Common myeloid progenitor, CD34-positive (primary cell): ENCODE measurements at regions of chr7 and their contacts with region 1.

Region 1: GRCh38 chr7:116211006-116211912 is 920 bp downstream of the TES start:
- DNase-seq: peak; percentile 82 to 91 (median 87)
- H3K4me3 ChIP-seq: peak overlapping the region; percentile 57 to 99 (median 88)
- H3K27ac ChIP-seq: peak overlapping the region; percentile 80 to 91
- H3K4me1 ChIP-seq: peaks cover 38 to 63% (median 49%) of the 10 kb centered on the region in 4 experiments
- H3K27me3 ChIP-seq: no peaks in the 10 kb centered on the region

Region 2: DNA sequence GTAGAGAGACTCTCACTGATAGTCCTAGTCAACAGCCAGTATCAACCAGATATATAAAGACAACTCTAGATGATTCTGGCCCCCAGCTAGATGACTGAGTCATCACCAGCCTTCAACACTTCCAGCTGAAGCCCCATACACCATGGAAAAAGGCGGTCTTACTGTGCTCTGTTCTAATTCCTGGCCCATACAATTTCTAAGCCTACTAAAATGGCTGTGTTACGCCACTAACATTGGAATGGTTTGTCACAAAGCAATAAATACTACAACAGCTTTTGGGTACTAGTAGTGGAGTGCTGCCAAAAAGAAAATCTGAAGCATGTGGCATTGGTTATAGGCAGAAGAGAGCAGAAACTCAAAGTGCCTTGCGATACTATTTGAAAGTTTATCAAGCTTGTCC is 13.9 kb before region 1 on chr7:
- CTCF ChIA-PET with region 1: interaction called, 26 read pairs
- POLR2A ChIA-PET with region 1: interaction called, 5 read pairs
- DNase-seq: no peak
- H3K4me3 ChIP-seq: no peak overlapping the region
- H3K27ac ChIP-seq: no peak overlapping the region
- H3K4me1 ChIP-seq: no peaks in the 10 kb centered on the region
- H3K27me3 ChIP-seq: no peaks in the 10 kb centered on the region

Region 3: DNA sequence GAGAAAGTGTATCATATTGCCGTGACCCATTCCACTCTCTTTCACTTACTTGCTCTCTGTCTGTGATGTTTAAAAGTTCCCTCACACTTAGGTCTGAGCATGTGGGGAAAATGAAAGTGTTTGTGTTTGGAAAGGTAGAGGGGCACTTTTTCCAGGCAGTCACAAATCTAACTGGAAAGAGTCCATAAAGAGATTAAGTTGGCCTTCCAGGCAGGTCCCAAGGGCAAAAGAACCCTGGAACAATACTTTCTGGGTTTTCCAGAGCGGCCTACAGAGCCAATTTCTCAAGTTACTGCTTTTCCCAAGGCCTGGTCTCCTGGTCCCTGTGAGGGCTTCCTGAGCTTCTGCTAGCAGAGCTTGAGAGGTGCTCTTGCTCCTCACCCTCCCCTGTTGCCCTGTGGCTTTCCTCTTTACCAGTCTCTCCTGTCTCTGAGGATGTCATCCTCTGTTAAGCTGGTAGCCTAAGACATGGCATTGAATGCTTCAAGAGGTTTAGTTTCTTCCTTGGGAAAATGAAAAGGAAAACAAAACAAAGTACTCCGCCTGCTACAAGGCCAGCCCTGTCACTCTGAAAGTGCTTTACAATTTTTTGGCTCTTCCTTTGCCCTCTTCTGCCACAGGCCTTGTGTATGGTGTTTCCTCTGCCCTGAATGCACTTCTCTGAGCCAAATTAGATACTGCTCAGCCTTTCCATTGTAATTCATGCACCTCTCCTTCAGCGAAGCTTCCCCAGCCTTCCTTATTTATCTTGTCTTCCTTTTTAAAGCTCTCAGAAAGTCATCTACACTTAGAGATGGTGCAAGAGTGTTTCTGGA is 19.1 kb after region 1 on chr7:
- CTCF ChIA-PET with region 1: interaction called, 21 read pairs
- POLR2A ChIA-PET with region 1: interaction called, 11 read pairs
- DNase-seq: peak in 1 of 3 donors; percentile 17
- H3K4me3 ChIP-seq: peak overlapping the region in 2 of 7 experiments; percentile 1 to 13
- H3K27ac ChIP-seq: peak overlapping the region in 1 of 2 experiments; percentile 30
- H3K4me1 ChIP-seq: peaks cover 16 to 49% (median 37%) of the 10 kb centered on the region in 4 experiments
- H3K27me3 ChIP-seq: no peaks in the 10 kb centered on the region